ENCODE measurements at regions of chr1 and their contacts with region 1.

Region 1: GRCh38 chr1:63773815-63774616 is at the start of gene ROR1:
- DNase-seq: peak; percentile 96
- total RNA-seq, gene ROR1: 19.3 to 25.8 TPM

Region 2: GRCh38 chr1:63615768-63616420 is 158.1 kb before region 1 on chr1:
- intact Hi-C with region 1: loop called in 1 of 2 experiments (anchors 10 kb)
- DNase-seq: no peak

Region 3: GRCh38 chr1:63691701-63692425 is 82.2 kb before region 1 on chr1:
- intact Hi-C with region 1: loop called in 1 of 2 experiments (anchors 10 kb)
- DNase-seq: no peak

Region 4: GRCh38 chr1:63888984-63889383 is 115.0 kb after region 1 on chr1:
- intact Hi-C with region 1: loop called in 1 of 2 experiments (anchors 10 kb)
- DNase-seq: no peak